Activated B cell treated with CpG ODN at 0.5 μM for 24 hours (primary cell): ENCODE measurements at regions of chr15 and their contacts with region 1.

Region 1: DNA sequence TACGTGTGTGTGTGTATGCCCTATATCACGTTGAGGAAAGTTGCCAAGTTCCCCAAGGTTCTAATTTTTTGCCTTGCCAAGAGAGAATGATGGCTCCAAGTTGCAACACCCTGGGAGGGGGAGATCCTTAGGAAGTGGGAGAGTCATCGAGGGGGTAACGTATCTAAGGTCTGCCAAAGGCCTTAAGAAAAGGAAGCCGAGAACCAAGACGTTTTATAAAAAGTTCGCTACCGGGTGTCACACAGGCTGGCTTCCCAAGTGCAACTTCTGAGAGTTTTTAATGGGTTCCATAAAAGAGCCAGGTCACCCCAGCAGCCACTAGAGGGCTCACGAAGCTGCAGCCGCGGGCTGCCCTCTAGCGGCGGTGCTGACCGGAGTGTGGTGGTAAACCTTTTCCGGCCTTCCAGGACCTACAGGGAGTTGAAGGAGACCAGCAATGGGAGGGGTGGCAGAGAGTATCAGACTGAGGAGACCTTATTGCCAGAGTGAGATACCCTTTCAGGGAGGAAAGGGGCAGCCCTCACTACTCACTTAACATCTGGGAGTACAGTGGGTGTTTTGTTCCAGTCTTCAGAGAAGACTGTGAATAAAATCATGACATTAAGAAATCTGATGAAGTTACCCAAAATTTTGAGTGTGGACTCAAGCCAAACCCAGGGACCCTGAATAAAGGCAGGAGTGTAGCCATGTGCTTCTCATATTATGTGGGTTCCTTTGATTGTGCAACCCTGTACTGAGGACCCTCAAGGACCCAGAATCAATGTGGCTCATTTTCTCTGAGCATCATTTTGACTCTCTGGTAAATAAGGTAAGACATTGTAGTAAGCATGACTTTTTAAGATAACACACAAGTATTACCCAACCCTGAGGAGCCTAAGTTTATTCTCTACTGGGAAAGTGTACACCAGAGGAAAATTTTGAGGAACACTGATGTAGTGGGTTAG is 2.5 kb upstream of the RFX7 start:
- DNase-seq: peak; percentile 78
- ATAC-seq: peak; percentile 70
- H3K4me3 Mint-ChIP-seq: peak overlapping the region; percentile 88
- H3K27ac Mint-ChIP-seq: peak overlapping the region; percentile 94
- H3K4me1 Mint-ChIP-seq: peaks cover 37% of the 10 kb centered on the region
- H3K27me3 Mint-ChIP-seq: no peaks in the 10 kb centered on the region
- CTCF ChIP-seq: peak; percentile 97

Region 2: DNA sequence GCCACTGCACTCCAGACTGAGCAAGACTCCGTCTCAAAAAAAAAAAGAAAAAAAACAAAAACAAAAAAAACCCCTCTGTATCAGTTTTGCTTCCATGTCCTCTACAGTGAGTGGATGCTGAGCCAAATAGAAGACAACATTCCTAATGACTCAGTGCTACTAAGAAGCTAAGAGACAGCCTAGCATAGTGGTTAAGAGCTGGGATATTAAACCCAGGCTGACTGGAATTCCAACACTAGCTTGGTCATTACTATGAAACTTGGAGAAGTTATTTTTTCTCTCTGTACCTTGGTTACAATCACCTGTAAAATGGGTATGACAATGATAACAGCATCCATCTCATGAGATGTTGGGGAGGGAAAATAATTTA is 597.1 kb before region 1 on chr15:
- CTCF ChIA-PET with region 1: no interaction called
- POLR2A ChIA-PET with region 1: no interaction called
- intact Hi-C with region 1: loop called (anchors 5 kb)
- DNase-seq: no peak
- ATAC-seq: no peak
- H3K4me3 Mint-ChIP-seq: no peak overlapping the region
- H3K27ac Mint-ChIP-seq: no peak overlapping the region
- H3K4me1 Mint-ChIP-seq: no peaks in the 10 kb centered on the region
- H3K27me3 Mint-ChIP-seq: no peaks in the 10 kb centered on the region
- CTCF ChIP-seq: no peak

Region 3: GRCh38 chr15:56017920-56018319 is 228.2 kb before region 1 on chr15:
- CTCF ChIA-PET with region 1: no interaction called
- POLR2A ChIA-PET with region 1: no interaction called
- intact Hi-C with region 1: no loop called
- DNase-seq: no peak
- ATAC-seq: no peak
- H3K4me3 Mint-ChIP-seq: no peak overlapping the region
- H3K27ac Mint-ChIP-seq: no peak overlapping the region
- H3K4me1 Mint-ChIP-seq: no peaks in the 10 kb centered on the region
- H3K27me3 Mint-ChIP-seq: peaks cover 9% of the 10 kb centered on the region
- CTCF ChIP-seq: no peak

Region 4: DNA sequence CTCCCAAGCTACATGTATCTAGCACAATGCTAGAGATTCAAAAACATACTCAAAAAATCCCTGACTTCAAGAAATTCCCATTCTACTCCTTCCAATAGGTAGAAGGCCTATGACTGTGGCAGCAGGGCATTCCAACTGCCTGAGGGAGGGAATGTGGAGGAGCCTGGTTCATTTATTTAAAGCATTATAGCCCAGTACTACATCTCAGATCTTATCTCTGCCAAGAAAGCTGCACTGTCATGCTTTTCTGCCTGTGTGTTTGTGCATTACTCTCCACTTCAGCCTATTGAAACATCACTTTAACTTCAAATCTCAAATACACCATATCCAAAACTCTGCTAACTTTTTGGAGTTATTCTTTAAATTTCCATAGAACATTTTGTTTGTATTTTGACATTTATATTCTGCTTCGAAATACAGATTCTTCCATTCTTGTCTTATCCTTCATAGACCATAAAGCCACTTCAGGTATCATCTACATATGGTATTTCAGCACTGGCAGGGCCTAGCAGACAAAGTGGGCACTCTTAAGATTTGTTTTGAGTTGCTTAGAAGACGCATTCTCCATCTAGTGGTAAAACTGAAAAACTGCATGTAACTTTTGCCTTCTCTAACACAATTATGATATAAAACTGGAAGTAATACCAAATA is 193.6 kb before region 1 on chr15:
- CTCF ChIA-PET with region 1: no interaction called
- POLR2A ChIA-PET with region 1: no interaction called
- intact Hi-C with region 1: loop called (anchors 5 kb)
- DNase-seq: no peak
- ATAC-seq: peak; percentile 47
- H3K4me3 Mint-ChIP-seq: no peak overlapping the region
- H3K27ac Mint-ChIP-seq: no peak overlapping the region
- H3K4me1 Mint-ChIP-seq: no peaks in the 10 kb centered on the region
- H3K27me3 Mint-ChIP-seq: no peaks in the 10 kb centered on the region
- CTCF ChIP-seq: peak; percentile 82

Region 5: DNA sequence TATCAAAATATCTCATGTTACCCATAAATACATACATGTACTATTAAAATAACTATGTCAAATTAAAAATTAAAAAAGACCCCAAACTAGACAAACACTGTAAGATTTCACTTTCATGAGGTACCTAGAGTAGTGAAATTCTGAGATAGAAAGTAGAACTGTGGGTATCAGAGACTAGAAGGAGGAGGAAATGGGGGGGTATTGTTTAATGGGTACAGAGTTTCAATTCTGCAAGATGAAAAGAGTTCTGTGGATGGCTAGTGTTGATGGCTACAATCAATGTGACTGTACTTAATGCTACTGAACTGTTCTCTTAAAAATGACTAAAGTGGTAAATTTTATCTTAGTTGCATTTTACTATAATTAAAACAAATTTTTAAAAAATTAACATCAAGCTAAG is 39.1 kb before region 1 on chr15:
- CTCF ChIA-PET with region 1: interaction called, 3 read pairs
- POLR2A ChIA-PET with region 1: interaction called, 12 read pairs
- intact Hi-C with region 1: loop called (anchors 2 kb)
- DNase-seq: no peak
- ATAC-seq: peak; percentile 69
- H3K4me3 Mint-ChIP-seq: peak overlapping the region; percentile 39
- H3K27ac Mint-ChIP-seq: peak overlapping the region; percentile 79
- H3K4me1 Mint-ChIP-seq: peaks cover 76% of the 10 kb centered on the region
- H3K27me3 Mint-ChIP-seq: no peaks in the 10 kb centered on the region
- CTCF ChIP-seq: no peak

Region 6: GRCh38 chr15:56428821-56429458 is 182.8 kb after region 1 on chr15:
- CTCF ChIA-PET with region 1: interaction called, 12 read pairs
- POLR2A ChIA-PET with region 1: interaction called, 4 read pairs
- intact Hi-C with region 1: loop called (anchors 1 kb)
- DNase-seq: no peak
- ATAC-seq: no peak
- H3K4me3 Mint-ChIP-seq: no peak overlapping the region
- H3K27ac Mint-ChIP-seq: no peak overlapping the region
- H3K4me1 Mint-ChIP-seq: no peaks in the 10 kb centered on the region
- H3K27me3 Mint-ChIP-seq: no peaks in the 10 kb centered on the region
- CTCF ChIP-seq: no peak

Region 7: GRCh38 chr15:56886932-56887781 is 641.0 kb after region 1 on chr15:
- CTCF ChIA-PET with region 1: no interaction called
- POLR2A ChIA-PET with region 1: no interaction called
- intact Hi-C with region 1: loop called (anchors 10 kb)
- DNase-seq: peak; percentile 81
- ATAC-seq: peak; percentile 85
- H3K4me3 Mint-ChIP-seq: peak overlapping the region; percentile 87
- H3K27ac Mint-ChIP-seq: peak overlapping the region; percentile 91
- H3K4me1 Mint-ChIP-seq: peaks cover 28% of the 10 kb centered on the region
- H3K27me3 Mint-ChIP-seq: no peaks in the 10 kb centered on the region
- CTCF ChIP-seq: no peak

Region 8: GRCh38 chr15:57591646-57592367 is 1345.7 kb after region 1 on chr15 and contains the start of gene MYZAP:
- CTCF ChIA-PET with region 1: no interaction called
- POLR2A ChIA-PET with region 1: no interaction called
- intact Hi-C with region 1: loop called (anchors 5 kb)
- DNase-seq: peak; percentile 59
- ATAC-seq: peak; percentile 83
- H3K4me3 Mint-ChIP-seq: peak within 1 kb of the TSS; percentile 81
- H3K27ac Mint-ChIP-seq: peak within 1 kb of the TSS; percentile 48
- H3K4me1 Mint-ChIP-seq: peaks cover 51% of the 10 kb centered on the region
- H3K27me3 Mint-ChIP-seq: peaks cover 3% of the 10 kb centered on the region
- CTCF ChIP-seq: no peak
- total RNA-seq, gene MYZAP: 0.88 and 1.00 TPM in 2 replicates